CD8-positive, alpha-beta memory T cell (primary cell): ENCODE measurements at regions of chr2 and their contacts with region 1.

Region 1: DNA sequence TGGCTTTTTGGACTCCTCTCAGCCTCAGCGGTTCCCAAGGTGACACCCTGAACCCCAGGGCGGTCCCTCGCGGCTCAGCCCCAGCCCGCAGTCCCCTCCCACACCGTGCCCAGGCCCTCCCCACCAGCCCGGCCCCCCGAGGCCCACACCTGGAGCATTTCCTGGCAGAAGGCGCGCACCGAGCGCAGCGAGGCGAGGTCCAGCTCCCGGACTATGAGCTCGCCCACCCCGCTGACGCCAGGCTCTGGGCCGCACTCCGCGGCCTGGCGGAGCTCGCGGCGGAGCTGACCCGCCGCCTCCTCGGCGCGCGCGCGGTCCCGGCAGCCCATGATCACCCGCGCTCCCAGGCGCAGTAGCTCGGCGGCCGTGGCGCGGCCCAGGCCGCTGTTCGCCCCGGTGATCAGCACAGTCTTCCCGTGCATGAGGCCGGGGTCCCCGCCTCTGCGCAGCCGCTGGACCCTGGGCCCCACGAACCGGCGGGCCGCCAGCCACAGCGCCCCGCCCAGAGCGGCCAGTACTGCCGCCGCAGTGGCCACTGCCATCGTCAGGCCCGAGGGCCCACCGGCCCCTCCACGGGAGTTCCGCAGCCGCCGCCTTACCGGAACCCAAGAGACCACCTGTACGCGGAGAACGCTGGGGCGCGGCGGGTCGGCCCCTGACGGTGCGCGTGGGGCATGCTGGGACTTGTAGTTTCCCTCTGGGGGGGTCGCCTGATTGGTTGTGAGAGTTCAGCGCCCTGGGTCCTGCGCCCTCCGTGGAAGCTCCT is at the start of gene RDH14:
- DNase-seq: peak; percentile 86 to 95 (median 91)
- H3K4me3 ChIP-seq: peak within 1 kb of the TSS; percentile 80
- H3K4me3 Mint-ChIP-seq: peak within 1 kb of the TSS; percentile 91 to 98 (median 95)
- H3K27ac ChIP-seq: peak within 1 kb of the TSS; percentile 84
- H3K27ac Mint-ChIP-seq: peak within 1 kb of the TSS; percentile 91 to 99 (median 98)
- H3K4me1 ChIP-seq: peaks cover 31% of the 10 kb centered on the region
- H3K4me1 Mint-ChIP-seq: peaks cover 37 to 58% (median 51%) of the 10 kb centered on the region in 3 donors
- H3K27me3 ChIP-seq: no peaks in the 10 kb centered on the region
- H3K27me3 Mint-ChIP-seq: peaks cover 0 to 2% of the 10 kb centered on the region in 2 donors
- total RNA-seq, gene RDH14: 16.9 to 18.1 TPM

Region 2: GRCh38 chr2:18546567-18546966 is 13.6 kb before region 1 on chr2:
- CTCF ChIA-PET with region 1: interaction called, 3 read pairs
- POLR2A ChIA-PET with region 1: interaction called, 13 read pairs
- DNase-seq: peak in 2 of 5 donors; percentile 14 to 19
- H3K4me3 ChIP-seq: no peak overlapping the region
- H3K4me3 Mint-ChIP-seq: peak overlapping the region in 5 of 7 donors; percentile 6 to 52 (median 27)
- H3K27ac ChIP-seq: no peak overlapping the region
- H3K27ac Mint-ChIP-seq: peak overlapping the region in 7 of 8 donors; percentile 8 to 83 (median 37)
- H3K4me1 ChIP-seq: peaks cover 13% of the 10 kb centered on the region
- H3K4me1 Mint-ChIP-seq: peaks cover 45 to 64% (median 63%) of the 10 kb centered on the region in 3 donors
- H3K27me3 ChIP-seq: no peaks in the 10 kb centered on the region
- H3K27me3 Mint-ChIP-seq: no peaks in the 10 kb centered on the region

Region 3: DNA sequence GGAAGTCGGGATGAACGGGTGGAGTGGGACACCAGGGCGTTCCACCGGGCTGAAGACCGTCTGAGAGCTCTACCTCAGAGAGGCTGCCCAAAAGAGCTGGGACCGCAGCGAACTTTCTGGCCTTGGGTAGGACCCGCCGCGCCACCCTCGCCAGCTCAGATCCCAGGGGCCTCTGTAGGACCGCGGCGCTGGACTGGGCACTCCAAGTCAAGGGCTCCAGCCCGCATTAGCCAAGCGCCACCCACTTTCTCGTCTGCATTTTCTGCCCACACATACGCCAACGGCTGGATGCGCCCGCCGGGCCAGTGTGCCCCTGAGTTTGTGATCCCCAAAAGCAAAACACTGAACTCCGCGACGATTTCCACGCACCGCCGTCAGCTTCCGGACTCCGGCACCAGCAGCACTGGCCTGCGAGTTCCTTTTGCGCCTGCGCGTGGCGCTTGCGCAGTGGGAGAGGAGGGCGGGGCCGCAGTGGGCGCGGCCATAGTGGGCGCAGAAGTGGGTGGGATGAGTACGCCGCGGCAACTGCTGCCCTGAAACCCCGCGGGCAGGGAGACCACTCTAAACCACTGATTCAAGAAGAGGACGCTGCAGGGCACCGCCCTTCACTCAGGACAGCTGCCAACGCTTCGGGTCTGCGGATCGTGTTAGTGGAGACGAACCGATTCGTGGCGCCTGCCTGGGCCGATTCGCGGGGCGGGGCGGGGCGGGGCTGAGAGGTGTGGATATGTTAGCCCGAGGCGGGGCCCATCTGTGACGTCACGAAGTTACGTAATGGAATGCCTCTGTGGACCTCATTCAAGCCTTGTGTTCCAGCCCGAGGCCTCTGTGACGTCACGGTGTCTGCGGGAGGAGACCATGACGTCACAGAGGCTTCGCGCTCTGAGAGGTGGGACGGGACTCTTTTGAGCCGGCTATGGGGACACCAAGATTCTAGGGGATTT is 787.7 kb after region 1 on chr2:
- CTCF ChIA-PET with region 1: interaction called, 5 read pairs
- POLR2A ChIA-PET with region 1: interaction called, 17 read pairs
- DNase-seq: peak; percentile 92 to 99 (median 97)
- H3K4me3 ChIP-seq: peak overlapping the region; percentile 86
- H3K4me3 Mint-ChIP-seq: peak overlapping the region; percentile 92 to 98 (median 96)
- H3K27ac ChIP-seq: peak overlapping the region; percentile 90
- H3K27ac Mint-ChIP-seq: peak overlapping the region; percentile 97 to 99 (median 98)
- H3K4me1 ChIP-seq: peaks cover 44% of the 10 kb centered on the region
- H3K4me1 Mint-ChIP-seq: peaks cover 27 to 53% (median 30%) of the 10 kb centered on the region in 3 donors
- H3K27me3 ChIP-seq: peaks cover 41% of the 10 kb centered on the region
- H3K27me3 Mint-ChIP-seq: peaks cover 39 to 44% of the 10 kb centered on the region in 2 donors